Calu3 (cell line): ENCODE measurements at regions of chr6 and their contacts with region 1.

Region 1: DNA sequence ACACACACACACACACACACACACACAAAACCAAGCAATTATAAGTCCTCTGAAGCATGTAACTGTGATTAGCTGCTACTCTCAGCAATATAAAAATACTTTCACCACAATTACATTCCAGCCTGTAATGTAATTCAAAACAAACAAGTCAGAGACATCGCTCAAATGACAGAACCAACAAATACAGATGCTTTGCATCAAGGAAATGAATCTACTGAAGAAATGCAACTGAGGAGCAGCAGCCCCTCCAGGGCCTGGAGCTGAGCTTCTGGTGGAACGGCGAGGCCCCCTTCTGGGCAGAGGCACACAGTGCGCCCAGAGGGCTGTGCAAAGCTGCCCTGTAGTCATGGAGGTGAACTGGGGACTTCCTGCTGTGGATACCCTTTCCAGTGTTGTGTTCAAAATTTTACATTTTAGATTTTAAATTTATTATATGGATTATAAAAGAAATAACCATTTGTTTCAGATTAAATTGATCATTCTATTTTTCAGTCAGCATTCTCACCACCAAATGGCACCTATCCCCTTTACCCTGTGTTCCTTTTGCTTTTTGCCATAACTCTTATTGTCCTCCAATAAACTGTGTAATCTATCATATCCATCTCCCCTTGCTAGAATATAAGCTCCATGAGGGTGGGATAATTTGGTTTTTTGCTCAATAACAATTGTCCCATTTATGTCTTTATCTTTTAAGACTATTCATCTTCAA is 23.2 kb downstream of the ADAT2 start:
- DNase-seq: peak; percentile 66
- H3K4me3 Mint-ChIP-seq: no peak overlapping the region
- H3K27ac Mint-ChIP-seq: no peak overlapping the region
- H3K4me1 Mint-ChIP-seq: no peaks in the 10 kb centered on the region
- H3K27me3 Mint-ChIP-seq: no peaks in the 10 kb centered on the region
- CTCF ChIP-seq: peak; percentile 81

Region 2: DNA sequence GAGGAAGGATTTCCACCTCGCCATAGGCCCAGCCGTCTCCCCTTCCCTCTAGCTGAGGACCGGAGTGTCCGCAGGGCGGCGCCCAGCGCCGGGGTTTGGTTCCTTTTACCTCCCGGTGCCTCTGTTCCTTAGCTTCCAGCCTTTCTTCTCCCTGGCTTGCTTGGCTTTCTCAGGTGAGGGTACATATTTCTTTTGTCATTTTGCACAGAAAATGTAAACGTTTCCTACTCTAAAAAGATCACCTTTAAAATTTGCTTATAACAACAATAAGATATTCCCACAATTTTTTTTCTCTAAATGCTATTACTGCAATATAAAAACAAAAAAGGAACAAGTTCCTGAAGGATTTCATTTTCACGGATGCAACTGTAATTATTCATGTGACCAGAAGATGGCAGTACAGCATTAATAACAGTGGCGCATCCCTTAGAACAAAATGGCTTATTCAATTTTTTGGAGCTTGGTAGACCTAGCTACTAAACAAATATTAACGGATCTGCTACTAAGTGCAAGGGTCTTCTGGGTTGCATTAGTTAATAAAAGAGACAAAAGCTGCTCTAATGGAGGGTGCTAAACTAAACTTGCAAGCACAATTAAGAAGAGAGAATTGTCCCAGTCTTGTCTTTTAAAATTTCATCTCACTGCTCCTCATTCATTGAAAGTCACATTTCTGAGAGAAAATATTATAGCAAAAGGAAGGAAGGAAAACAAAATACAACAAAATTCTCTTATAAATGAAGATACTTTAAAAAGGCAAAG is 952.6 kb before region 1 on chr6:
- CTCF ChIA-PET with region 1: interaction called, 12 read pairs
- intact Hi-C with region 1: loop called (anchors 5 kb)
- DNase-seq: peak; percentile 62
- H3K4me3 Mint-ChIP-seq: no peak overlapping the region
- H3K27ac Mint-ChIP-seq: no peak overlapping the region
- H3K4me1 Mint-ChIP-seq: no peaks in the 10 kb centered on the region
- H3K27me3 Mint-ChIP-seq: peaks cover 7% of the 10 kb centered on the region
- CTCF ChIP-seq: peak; percentile 49

Region 3: DNA sequence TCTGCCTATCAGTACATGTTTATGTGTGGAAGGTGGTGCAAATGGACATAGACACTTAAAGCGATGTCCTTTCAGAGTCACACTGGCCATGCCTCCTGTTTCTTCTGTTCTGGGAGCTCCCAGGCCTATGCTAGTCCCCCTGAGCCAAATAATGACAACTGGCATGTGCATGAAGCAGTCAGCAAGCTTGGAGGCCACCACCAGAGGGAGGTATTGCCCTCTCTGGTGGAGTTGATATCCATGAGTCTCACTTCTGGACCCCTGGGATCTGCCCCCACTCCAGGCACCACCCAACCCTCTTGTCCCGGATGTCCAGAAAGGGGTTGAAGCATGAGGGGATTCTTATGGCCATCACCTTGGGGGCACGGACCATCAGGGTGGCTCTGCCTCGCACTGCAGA is 194.4 kb before region 1 on chr6:
- CTCF ChIA-PET with region 1: interaction called, 3 read pairs
- intact Hi-C with region 1: loop called (anchors 5 kb)
- DNase-seq: peak; percentile 39
- H3K4me3 Mint-ChIP-seq: no peak overlapping the region
- H3K27ac Mint-ChIP-seq: no peak overlapping the region
- H3K4me1 Mint-ChIP-seq: no peaks in the 10 kb centered on the region
- H3K27me3 Mint-ChIP-seq: no peaks in the 10 kb centered on the region
- CTCF ChIP-seq: peak; percentile 38

Region 4: DNA sequence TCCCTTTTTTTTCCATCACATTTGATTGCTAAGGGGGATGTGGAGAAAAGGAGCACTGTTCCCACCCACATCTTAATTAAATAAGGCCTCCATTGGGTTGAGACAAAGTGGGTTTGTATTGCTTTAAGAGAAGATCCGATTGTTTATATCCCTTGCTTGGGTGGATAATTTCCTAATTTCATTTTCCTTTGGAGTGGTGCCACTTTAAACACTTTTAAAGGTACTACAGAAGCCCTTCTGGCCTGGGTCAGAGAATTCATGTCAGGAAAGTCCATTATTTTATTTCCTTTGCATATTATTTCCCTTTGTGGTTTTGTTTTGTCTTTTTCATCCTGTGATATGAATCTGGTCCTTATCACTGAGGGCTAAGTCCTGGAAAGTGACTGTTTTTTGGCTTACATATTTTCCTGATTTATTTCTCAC is 307.4 kb after region 1 on chr6:
- CTCF ChIA-PET with region 1: no interaction called
- intact Hi-C with region 1: no loop called
- DNase-seq: no peak
- H3K4me3 Mint-ChIP-seq: no peak overlapping the region
- H3K27ac Mint-ChIP-seq: no peak overlapping the region
- H3K4me1 Mint-ChIP-seq: no peaks in the 10 kb centered on the region
- H3K27me3 Mint-ChIP-seq: no peaks in the 10 kb centered on the region
- CTCF ChIP-seq: no peak